Posterior vena cava (tissue), 2 donors: ENCODE measurements at regions of chr10 and their contacts with region 1.

Region 1: DNA sequence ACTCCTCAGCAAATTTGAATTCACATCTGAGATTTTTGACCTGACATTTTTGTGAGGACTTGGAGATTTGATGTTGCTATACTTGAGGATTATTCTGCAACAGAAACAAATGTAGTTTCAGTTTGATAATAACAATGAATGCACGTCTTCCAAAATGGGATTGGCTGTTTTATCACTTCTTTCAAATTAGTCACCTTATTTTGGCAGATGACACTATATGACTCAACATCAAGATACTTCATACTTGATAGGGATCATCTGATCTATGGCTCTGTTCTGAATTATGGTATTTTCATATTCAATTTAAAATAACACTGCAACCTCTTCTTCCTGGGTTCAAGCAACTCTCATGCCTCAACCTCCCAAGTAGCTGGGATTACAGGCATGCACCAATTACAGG is 24.2 kb downstream of the ARL5B start:
- DNase-seq: no peak

Region 2: GRCh38 chr10:18793951-18794350 is 110.5 kb after region 1 on chr10:
- intact Hi-C with region 1: loop called in 1 of 2 experiments (anchors 5 kb)
- DNase-seq: no peak